HCT116 (cell line): ENCODE measurements at regions of chr16 and their contacts with region 1.

Region 1: DNA sequence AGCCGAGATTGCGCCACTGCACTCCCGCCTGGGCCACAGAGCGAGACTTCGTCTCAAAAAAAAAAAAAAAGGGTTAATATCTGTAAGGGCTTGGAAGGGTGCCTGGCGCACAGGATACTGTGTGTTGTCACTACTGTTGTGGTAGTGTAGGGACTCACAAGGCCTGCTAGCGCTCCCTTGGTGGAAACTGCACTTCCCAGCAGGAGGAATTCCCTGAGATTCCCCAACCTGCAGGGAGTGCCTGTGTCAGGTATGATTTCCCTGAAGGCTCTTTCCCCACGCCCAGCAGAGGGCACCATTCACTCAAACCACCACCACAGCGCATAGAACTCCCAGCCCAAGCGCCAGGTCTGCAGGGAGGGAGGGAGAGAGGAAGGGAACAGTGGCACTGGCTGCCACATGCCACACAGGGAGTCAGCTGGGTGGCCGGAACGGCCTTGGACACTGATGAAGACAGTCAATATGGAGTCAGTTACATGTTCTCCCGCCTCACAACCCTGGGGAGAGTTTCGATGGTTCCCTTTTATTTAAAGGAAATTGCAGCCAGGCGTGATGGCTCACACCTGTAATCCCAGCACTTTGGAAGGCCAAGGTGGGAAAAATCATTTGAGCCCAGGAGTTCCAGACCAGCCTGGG is 32.7 kb upstream of the CDH1 start:
- DNase-seq: peak; percentile 79
- ATAC-seq: peak; percentile 73
- H3K4me3 ChIP-seq: no peak overlapping the region
- H3K27ac ChIP-seq: no peak overlapping the region
- H3K4me1 ChIP-seq: peaks cover 23 to 38% of the 10 kb centered on the region in 2 experiments
- H3K27me3 ChIP-seq: no peaks in the 10 kb centered on the region
- CTCF ChIP-seq: peak; percentile 81 to 98 (median 94)
- POLR2A ChIP-seq: no peak
- RAD21 ChIP-seq: peak; percentile 99

Region 2: GRCh38 chr16:68444056-68444657 is 260.2 kb before region 1 on chr16:
- CTCF ChIA-PET with region 1: no interaction called
- POLR2A ChIA-PET with region 1: no interaction called
- RAD21 ChIA-PET with region 1: no interaction called
- intact Hi-C with region 1: no loop called
- DNase-seq: no peak
- ATAC-seq: no peak
- H3K4me3 ChIP-seq: no peak overlapping the region
- H3K27ac ChIP-seq: no peak overlapping the region
- H3K4me1 ChIP-seq: no peaks in the 10 kb centered on the region
- H3K27me3 ChIP-seq: peaks cover 40% of the 10 kb centered on the region
- CTCF ChIP-seq: no peak
- POLR2A ChIP-seq: no peak
- RAD21 ChIP-seq: no peak

Region 3: GRCh38 chr16:68528686-68529379 is 175.5 kb before region 1 on chr16:
- CTCF ChIA-PET with region 1: no interaction called
- POLR2A ChIA-PET with region 1: no interaction called
- RAD21 ChIA-PET with region 1: interaction called in 1 of 2 experiments, 4 read pairs
- intact Hi-C with region 1: loop called (anchors 2 kb)
- DNase-seq: peak; percentile 75
- ATAC-seq: peak; percentile 92
- H3K4me3 ChIP-seq: no peak overlapping the region
- H3K27ac ChIP-seq: no peak overlapping the region
- H3K4me1 ChIP-seq: peaks cover 10 to 23% of the 10 kb centered on the region in 2 experiments
- H3K27me3 ChIP-seq: no peaks in the 10 kb centered on the region
- CTCF ChIP-seq: peak; percentile 66 to 98 (median 86)
- POLR2A ChIP-seq: no peak
- RAD21 ChIP-seq: peak; percentile 98

Region 4: GRCh38 chr16:68590201-68590994 is 114.0 kb before region 1 on chr16:
- CTCF ChIA-PET with region 1: interaction called, 9 read pairs
- POLR2A ChIA-PET with region 1: no interaction called
- RAD21 ChIA-PET with region 1: interaction called, 5 to 6 read pairs
- intact Hi-C with region 1: loop called (anchors 2 kb)
- DNase-seq: peak; percentile 54
- ATAC-seq: peak; percentile 100
- H3K4me3 ChIP-seq: peak overlapping the region; percentile 13 to 27; a peak in 2 of 4 replicates
- H3K27ac ChIP-seq: no peak overlapping the region
- H3K4me1 ChIP-seq: peaks cover 0 to 9% of the 10 kb centered on the region in 2 experiments; a peak in 3 of 4 replicates
- H3K27me3 ChIP-seq: no peaks in the 10 kb centered on the region
- CTCF ChIP-seq: peak; percentile 85 to 90 (median 85)
- POLR2A ChIP-seq: no peak
- RAD21 ChIP-seq: peak; percentile 99

Region 5: DNA sequence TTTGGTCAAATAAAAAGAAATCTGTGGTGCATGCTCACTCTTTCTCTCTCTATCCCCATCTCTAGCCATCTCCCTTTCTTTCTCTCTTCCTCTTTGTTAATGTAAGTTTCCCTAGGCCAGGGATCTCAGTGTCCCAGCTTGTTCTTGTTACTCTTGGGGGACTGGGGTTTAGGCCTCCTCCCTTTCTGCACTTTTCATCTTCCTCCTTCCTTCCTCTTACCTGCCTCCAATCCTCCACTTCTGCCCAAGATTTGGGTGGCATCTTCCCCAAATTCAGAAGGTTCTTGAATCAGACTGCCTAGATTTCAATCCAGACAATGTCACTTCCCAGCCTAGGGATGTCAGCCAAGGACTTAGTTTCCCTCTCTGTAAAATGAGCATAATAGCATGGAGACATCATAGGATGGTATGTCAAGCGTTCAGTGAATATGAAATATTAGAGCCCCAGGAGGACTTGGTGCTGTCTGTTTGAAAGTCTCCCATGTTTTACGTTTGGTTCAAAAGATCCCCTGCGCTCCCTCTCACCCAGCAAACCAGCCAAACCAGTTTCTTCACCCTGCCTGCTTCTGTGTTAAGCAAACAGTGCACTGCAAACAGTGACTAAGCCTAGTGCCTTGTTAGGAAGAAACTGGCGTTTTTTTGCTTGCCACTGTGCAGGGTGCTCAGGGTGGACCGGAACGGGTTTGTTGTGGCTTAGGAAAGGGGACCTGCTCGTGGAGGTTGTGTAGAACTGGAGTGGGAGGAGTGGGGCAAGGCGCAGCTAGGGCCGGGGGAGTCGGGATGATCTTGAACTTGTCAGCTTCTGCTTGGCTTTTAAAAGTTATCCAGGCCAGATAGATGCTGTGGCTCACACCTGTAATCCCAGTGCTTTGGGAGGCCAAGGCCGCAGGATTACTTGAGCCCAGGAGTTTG is 40.3 kb after region 1 on chr16:
- CTCF ChIA-PET with region 1: no interaction called
- POLR2A ChIA-PET with region 1: no interaction called
- RAD21 ChIA-PET with region 1: no interaction called
- intact Hi-C with region 1: loop called (anchors 5 kb)
- DNase-seq: peak; percentile 88
- ATAC-seq: peak; percentile 88
- H3K4me3 ChIP-seq: peak overlapping the region; percentile 16 to 41
- H3K27ac ChIP-seq: peak overlapping the region; percentile 68
- H3K4me1 ChIP-seq: peaks cover 72 to 82% of the 10 kb centered on the region in 2 experiments
- H3K27me3 ChIP-seq: no peaks in the 10 kb centered on the region
- CTCF ChIP-seq: no peak
- POLR2A ChIP-seq: no peak
- RAD21 ChIP-seq: peak; percentile 44; the same call in 1 of the 2 replicates

Region 6: DNA sequence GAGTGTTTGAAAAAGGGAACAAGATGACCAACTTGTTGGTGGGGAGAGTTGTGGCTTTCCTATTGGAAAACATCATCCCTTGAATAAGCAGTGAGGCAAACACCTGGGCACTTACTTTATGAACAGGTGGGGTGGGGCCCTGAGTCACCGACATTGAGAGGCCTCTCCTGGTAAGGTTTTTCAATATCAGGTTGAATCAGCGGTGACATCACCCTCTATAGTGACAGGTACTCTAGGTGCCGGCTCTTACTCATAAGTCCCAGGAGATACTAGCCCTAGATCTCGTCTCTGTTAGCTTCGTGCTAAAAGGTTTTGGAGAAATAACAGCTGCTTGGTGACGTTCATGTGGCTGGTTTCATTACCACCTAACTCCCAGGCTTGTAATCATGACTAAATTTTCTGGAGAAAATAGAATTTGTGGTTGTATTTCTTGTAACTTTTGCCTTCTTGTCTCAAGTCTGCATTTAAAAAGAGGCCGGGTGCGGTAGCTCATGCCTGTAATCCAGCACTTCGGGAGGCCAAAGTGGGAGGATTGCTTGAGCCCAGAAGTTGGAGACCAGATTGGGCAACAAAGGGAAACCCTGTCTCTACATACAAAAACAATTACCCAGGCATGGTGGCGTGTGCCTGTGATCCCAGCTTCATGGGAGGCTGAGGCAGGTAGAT is 52.0 kb after region 1 on chr16:
- CTCF ChIA-PET with region 1: no interaction called
- POLR2A ChIA-PET with region 1: no interaction called
- RAD21 ChIA-PET with region 1: no interaction called
- intact Hi-C with region 1: loop called (anchors 5 kb)
- DNase-seq: peak; percentile 98
- ATAC-seq: peak; percentile 88
- H3K4me3 ChIP-seq: peak overlapping the region in 1 of 2 experiments; percentile 24; a peak in 2 of 4 replicates
- H3K27ac ChIP-seq: peak overlapping the region; percentile 64; the same call in 1 of the 2 replicates
- H3K4me1 ChIP-seq: peaks cover 61 to 80% of the 10 kb centered on the region in 2 experiments
- H3K27me3 ChIP-seq: no peaks in the 10 kb centered on the region
- CTCF ChIP-seq: no peak
- POLR2A ChIP-seq: no peak
- RAD21 ChIP-seq: peak; percentile 33; the same call in 1 of the 2 replicates

Region 7: GRCh38 chr16:68800257-68800875 is 96.0 kb after region 1 on chr16:
- CTCF ChIA-PET with region 1: interaction called, 3 read pairs
- POLR2A ChIA-PET with region 1: no interaction called
- RAD21 ChIA-PET with region 1: interaction called in 1 of 2 experiments, 3 read pairs
- intact Hi-C with region 1: loop called (anchors 1 kb)
- DNase-seq: peak; percentile 62
- ATAC-seq: peak; percentile 95
- H3K4me3 ChIP-seq: no peak overlapping the region
- H3K27ac ChIP-seq: no peak overlapping the region
- H3K4me1 ChIP-seq: peaks cover 17 to 24% of the 10 kb centered on the region in 2 experiments
- H3K27me3 ChIP-seq: no peaks in the 10 kb centered on the region
- CTCF ChIP-seq: peak; percentile 87 to 90 (median 88)
- POLR2A ChIP-seq: no peak
- RAD21 ChIP-seq: peak; percentile 91

Region 8: DNA sequence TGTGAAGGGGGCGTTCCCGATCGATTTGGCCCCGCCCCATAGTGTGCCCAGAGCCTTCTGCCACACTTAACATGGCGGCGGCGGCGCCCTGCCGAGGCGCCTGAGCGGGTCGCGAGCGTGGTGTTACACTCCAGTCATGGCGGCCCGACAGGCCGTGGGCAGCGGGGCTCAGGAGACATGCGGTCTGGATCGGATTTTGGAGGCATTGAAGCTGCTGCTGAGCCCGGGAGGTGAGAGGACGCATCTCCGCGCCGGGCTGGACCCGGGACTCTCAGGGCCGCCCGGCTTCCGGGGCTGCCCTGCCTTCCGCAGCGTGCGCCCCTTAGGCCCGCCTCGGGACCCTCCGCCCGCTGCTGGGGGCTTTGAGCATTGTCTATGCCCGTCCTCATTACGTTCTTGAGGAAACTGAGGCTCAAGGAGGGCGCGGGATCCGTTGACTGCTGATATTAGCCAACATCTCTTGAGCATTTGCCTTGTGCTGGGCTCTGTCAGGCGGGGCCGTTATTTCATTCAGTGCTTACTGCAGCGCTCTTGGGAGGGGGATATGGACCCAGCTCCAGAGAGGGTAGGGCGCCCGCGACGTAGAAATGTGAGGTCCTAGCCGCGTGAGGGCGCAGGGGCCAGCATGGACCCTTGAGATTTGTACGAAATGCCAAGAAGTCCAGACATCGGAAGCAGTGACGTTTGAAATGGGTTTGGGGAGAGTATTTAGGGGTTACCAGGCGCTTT is 139.3 kb after region 1 on chr16 and contains the start of gene TANGO6:
- CTCF ChIA-PET with region 1: no interaction called
- POLR2A ChIA-PET with region 1: no interaction called
- RAD21 ChIA-PET with region 1: no interaction called
- intact Hi-C with region 1: loop called (anchors 2 kb)
- DNase-seq: peak; percentile 47
- ATAC-seq: peak; percentile 87
- H3K4me3 ChIP-seq: peak within 1 kb of the TSS; percentile 88 to 97
- H3K27ac ChIP-seq: peak within 1 kb of the TSS; percentile 67
- H3K4me1 ChIP-seq: peaks cover 2 to 12% of the 10 kb centered on the region in 2 experiments; a peak in 3 of 4 replicates
- H3K27me3 ChIP-seq: no peaks in the 10 kb centered on the region
- CTCF ChIP-seq: peak; percentile 18 to 39 (median 35); a peak in 4 of 6 replicates
- POLR2A ChIP-seq: peak; percentile 94
- RAD21 ChIP-seq: peak; percentile 38; the same call in 1 of the 2 replicates
- total RNA-seq, gene TANGO6: 16.4 TPM

Region 9: DNA sequence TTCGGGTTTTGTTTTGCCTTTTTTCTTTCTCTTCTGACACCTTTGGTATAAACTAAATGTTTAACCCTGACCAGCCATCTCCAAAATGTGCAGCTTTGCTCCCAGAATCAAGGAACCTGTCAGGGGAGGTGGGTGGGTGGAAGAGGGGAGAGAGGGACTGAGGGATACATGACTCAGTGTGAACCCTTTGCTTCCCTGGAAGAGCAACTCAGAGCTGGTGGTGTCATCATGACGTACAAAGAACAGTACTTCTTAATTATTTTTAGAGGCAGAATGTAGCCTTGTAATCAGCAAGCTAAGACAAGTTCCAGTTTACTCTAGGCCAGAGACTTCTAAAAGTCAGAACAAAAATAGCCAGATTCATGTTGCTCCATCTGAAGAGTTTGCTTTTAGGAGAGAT is 281.5 kb after region 1 on chr16:
- CTCF ChIA-PET with region 1: no interaction called
- POLR2A ChIA-PET with region 1: no interaction called
- RAD21 ChIA-PET with region 1: no interaction called
- intact Hi-C with region 1: no loop called
- DNase-seq: peak; percentile 51
- ATAC-seq: peak; percentile 72
- H3K4me3 ChIP-seq: no peak overlapping the region
- H3K27ac ChIP-seq: peak overlapping the region; percentile 49; the same call in 1 of the 2 replicates
- H3K4me1 ChIP-seq: peaks cover 30 to 57% of the 10 kb centered on the region in 2 experiments
- H3K27me3 ChIP-seq: no peaks in the 10 kb centered on the region
- CTCF ChIP-seq: no peak
- POLR2A ChIP-seq: no peak
- RAD21 ChIP-seq: no peak